ENCODE measurements at regions of chr3 and their contacts with region 1.

Region 1: DNA sequence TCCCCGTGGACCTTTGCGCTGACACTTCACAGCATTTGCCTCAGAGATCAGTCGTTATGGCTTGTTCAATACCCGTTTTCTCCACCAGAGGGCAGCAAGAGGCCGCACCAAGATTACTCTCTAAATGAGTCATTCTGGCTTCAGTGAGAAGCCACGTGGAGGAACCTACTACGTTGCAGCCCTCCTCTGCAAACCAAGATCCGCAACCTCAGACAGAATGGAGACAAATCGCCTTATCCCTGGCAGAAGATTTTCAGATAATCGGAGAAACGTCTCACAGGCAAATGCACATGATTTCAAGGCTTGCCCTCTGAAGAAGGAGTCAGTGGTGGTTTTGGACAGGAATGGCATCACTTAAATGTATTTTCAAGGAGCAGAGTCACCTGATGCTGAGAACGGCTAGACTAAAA is 60.5 kb downstream of the GTPBP8 start:
- DNase-seq: peak; percentile 63
- ATAC-seq: peak; percentile 99
- H3K4me3 ChIP-seq: no peak overlapping the region
- H3K27ac ChIP-seq: no peak overlapping the region
- H3K4me1 ChIP-seq: peaks cover 3% of the 10 kb centered on the region
- H3K27me3 ChIP-seq: no peaks in the 10 kb centered on the region
- CTCF ChIP-seq: peak; percentile 85 to 93 (median 93); a peak in 5 of 6 replicates
- EP300 ChIP-seq: peak; percentile 33 to 45; a peak in 1 of 4 replicates
- POLR2A ChIP-seq: no peak
- RAD21 ChIP-seq: peak; percentile 93

Region 2: GRCh38 chr3:112688819-112689218 is 362.5 kb before region 1 on chr3:
- CTCF ChIA-PET with region 1: no interaction called
- POLR2A ChIA-PET with region 1: no interaction called
- RAD21 ChIA-PET with region 1: no interaction called
- SMC1A ChIA-PET with region 1: no interaction called
- in situ Hi-C with region 1: no loop called
- intact Hi-C with region 1: no loop called
- DNase-seq: no peak
- ATAC-seq: no peak
- H3K4me3 ChIP-seq: no peak overlapping the region
- H3K27ac ChIP-seq: no peak overlapping the region
- H3K4me1 ChIP-seq: no peaks in the 10 kb centered on the region
- H3K27me3 ChIP-seq: peaks cover 5 to 6% of the 10 kb centered on the region in 2 experiments; a peak in 3 of 4 replicates
- CTCF ChIP-seq: no peak
- EP300 ChIP-seq: no peak
- POLR2A ChIP-seq: no peak
- RAD21 ChIP-seq: no peak

Region 3: GRCh38 chr3:113019182-113020137 is 31.8 kb before region 1 on chr3:
- CTCF ChIA-PET with region 1: no interaction called
- POLR2A ChIA-PET with region 1: no interaction called
- RAD21 ChIA-PET with region 1: no interaction called
- SMC1A ChIA-PET with region 1: no interaction called
- in situ Hi-C with region 1: no loop called
- intact Hi-C with region 1: no loop called
- DNase-seq: peak; percentile 67
- ATAC-seq: peak; percentile 94
- H3K4me3 ChIP-seq: peak overlapping the region; percentile 93
- H3K27ac ChIP-seq: peak overlapping the region; percentile 86
- H3K4me1 ChIP-seq: peaks cover 4% of the 10 kb centered on the region; the same call in 1 of the 2 replicates
- H3K27me3 ChIP-seq: no peaks in the 10 kb centered on the region
- CTCF ChIP-seq: no peak
- EP300 ChIP-seq: peak in 1 of 2 experiments; percentile 11; a peak in 1 of 4 replicates
- POLR2A ChIP-seq: peak; percentile 93
- RAD21 ChIP-seq: no peak

Region 4: DNA sequence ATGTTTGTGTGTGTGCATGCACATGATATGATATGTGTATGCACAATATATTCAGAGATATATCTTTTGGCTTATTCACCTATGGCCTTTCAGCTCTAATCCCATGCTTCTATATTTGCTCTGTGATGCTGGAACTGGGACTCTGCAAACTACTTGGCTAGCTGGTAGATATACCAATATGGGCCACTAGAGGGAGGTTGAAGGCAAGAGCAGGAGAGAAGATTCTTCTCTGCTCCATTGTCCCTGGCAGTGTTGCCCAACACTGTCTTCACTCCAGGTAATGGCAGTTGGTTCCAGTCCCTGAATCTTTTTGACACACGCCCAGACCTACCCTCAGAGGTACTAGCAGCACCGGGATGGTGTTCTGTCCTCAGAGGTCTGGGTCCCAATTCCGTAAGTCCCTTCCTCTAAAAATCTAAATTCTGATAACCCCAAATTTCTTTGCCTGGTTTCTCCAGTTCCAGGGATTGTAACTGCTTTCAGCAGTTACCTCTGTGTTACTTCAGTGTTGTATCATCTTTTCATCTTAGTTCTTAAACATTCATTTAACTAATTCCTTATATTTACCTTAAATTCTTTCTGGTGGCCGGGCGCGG is 15.8 kb before region 1 on chr3:
- CTCF ChIA-PET with region 1: interaction called, 14 read pairs
- POLR2A ChIA-PET with region 1: no interaction called
- RAD21 ChIA-PET with region 1: no interaction called
- SMC1A ChIA-PET with region 1: no interaction called
- in situ Hi-C with region 1: no loop called
- intact Hi-C with region 1: no loop called
- DNase-seq: no peak
- ATAC-seq: peak; percentile 95
- H3K4me3 ChIP-seq: no peak overlapping the region
- H3K27ac ChIP-seq: no peak overlapping the region
- H3K4me1 ChIP-seq: no peaks in the 10 kb centered on the region
- H3K27me3 ChIP-seq: no peaks in the 10 kb centered on the region
- CTCF ChIP-seq: peak; percentile 72 to 92 (median 85)
- EP300 ChIP-seq: no peak
- POLR2A ChIP-seq: no peak
- RAD21 ChIP-seq: peak; percentile 61

Region 5: DNA sequence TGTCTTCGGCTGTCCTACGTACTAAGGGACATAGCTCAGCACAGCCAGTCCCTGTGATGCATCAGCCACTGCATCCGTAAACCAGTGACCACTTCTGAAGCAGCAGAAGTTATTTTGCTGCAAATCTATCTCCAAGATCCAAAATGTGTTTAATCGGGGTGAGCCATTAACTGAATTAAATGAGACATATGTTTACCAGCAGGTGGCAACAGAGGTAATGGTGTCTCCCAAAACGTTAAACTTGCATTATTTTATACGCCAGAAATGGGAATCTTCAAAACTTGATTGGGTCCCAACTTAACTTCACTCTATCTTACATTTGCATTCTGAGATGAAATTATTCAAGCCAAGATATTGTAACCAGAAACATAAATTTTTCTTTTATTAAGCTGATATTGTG is 84.8 kb after region 1 on chr3:
- CTCF ChIA-PET with region 1: no interaction called
- POLR2A ChIA-PET with region 1: no interaction called
- RAD21 ChIA-PET with region 1: no interaction called
- SMC1A ChIA-PET with region 1: interaction called, 4 read pairs
- in situ Hi-C with region 1: no loop called
- intact Hi-C with region 1: loop called (anchors 5 kb)
- DNase-seq: no peak
- ATAC-seq: 0 out of 3 replicates have a peak, but pooled peaks have one; percentile 31
- H3K4me3 ChIP-seq: no peak overlapping the region
- H3K27ac ChIP-seq: no peak overlapping the region
- H3K4me1 ChIP-seq: no peaks in the 10 kb centered on the region
- H3K27me3 ChIP-seq: no peaks in the 10 kb centered on the region
- CTCF ChIP-seq: peak; percentile 40 to 42 (median 42); a peak in 4 of 6 replicates
- EP300 ChIP-seq: no peak
- POLR2A ChIP-seq: no peak
- RAD21 ChIP-seq: peak; percentile 40; the same call in 1 of the 2 replicates

Measured in GM12878 (cell line).